Activated CD8-positive, alpha-beta T cell treated with anti-CD3 and anti-CD28 coated beads for 36 hours (primary cell): ENCODE measurements at regions of chr1 and their contacts with region 1.

Region 1: DNA sequence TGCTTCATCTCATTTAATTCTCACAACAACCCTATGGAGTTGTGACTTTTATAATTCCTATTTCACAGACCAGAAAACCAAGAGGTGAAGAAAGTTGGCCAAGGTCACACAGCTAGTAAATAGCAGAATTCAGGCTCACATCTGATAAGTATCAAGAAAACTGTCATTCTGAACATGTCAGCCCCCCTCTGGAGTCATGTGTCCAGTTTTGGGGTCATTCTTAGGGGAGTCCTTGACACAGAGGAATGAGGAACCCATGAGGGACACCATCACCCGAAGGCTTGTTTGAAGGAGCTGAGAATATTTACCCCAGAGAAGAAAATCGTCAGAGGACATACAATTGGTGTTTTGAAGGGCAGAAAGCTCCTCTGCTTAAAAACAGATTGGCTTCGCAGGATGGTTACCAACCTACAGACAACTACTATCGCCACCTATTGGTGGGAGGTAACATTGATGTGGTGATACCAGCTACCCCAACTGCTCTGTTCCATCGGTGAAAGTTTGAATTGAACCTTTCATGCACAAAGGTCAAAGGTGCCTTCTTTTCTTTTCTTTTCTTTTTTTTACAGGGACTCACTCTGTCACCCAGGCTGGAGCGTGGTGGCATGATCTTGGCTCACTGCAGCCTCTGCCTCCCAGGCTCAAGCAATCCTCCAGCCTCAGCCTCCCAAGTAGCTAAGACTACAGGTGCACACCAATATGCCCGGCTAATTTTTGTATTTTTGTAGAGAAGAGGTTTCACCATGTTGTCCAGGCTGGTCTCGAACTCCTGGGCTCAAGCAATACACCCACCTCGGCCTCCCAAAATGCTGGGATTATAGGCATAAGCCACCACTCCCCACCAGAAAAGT is 31.3 kb downstream of the NCMAP start:
- DNase-seq: peak; percentile 70
- ATAC-seq: peak; percentile 98
- H3K4me3 Mint-ChIP-seq: no peak overlapping the region
- H3K27ac Mint-ChIP-seq: peak overlapping the region; percentile 78
- H3K4me1 Mint-ChIP-seq: peaks cover 8% of the 10 kb centered on the region
- H3K27me3 Mint-ChIP-seq: no peaks in the 10 kb centered on the region
- CTCF ChIP-seq: peak; percentile 71

Region 2: DNA sequence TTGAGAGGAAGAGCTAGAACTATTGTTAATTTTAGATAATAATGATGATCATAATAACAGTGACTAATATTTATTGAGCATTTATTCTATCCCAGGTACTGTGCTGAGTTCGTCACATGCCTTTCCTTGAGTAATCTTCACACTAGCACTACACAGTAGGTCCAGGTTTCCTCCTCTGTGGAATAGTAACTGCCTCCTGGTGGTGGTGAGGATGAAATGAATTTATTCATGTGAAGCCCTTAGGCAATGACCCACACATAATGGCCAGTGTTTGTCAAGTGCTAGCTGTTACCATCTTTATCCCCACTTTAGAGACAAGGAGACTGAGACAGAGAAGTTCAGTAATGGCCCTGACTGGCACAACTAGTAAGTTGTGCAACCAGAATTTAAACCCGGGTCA is 165.7 kb before region 1 on chr1:
- CTCF ChIA-PET with region 1: interaction called, 67 read pairs
- POLR2A ChIA-PET with region 1: no interaction called
- intact Hi-C with region 1: loop called (anchors 5 kb)
- DNase-seq: no peak
- ATAC-seq: no peak
- H3K4me3 Mint-ChIP-seq: no peak overlapping the region
- H3K27ac Mint-ChIP-seq: no peak overlapping the region
- H3K4me1 Mint-ChIP-seq: peaks cover 57% of the 10 kb centered on the region
- H3K27me3 Mint-ChIP-seq: no peaks in the 10 kb centered on the region
- CTCF ChIP-seq: no peak

Region 3: DNA sequence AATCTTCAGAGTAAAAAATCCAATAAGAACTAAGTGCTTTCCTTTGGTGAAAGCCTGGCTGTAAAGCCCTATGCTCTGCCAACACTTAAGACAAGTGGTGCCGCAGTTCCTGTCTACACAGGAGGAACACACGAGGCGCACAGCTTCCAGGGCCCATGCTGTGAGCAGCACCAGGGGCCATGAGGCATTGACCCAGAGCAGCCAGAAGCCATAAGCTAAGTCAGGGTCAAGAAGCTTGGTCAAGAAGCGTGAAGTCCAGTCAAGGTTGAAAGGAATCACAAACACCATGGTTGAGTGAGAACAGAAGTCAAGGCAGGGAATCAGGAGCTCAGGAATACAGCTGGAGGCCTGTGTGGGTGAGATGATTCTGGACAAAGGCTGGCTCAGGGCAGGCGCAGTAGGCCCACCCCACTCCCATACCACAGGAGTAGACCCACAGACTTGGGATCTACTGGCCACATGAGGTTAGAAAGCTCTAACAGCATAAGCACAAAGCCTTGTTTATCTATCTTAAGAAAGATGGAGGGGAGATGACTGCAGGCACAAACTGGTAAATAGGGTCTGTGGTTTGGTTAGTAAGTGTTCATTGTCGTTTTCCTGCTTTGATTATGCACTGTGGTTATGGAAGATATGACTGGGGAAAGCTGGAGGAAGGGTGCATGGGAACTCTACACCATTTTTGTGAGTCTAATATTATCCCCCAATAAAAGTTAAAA is 127.5 kb before region 1 on chr1:
- CTCF ChIA-PET with region 1: interaction called, 10 read pairs
- POLR2A ChIA-PET with region 1: no interaction called
- intact Hi-C with region 1: no loop called
- DNase-seq: no peak
- ATAC-seq: no peak
- H3K4me3 Mint-ChIP-seq: no peak overlapping the region
- H3K27ac Mint-ChIP-seq: peak overlapping the region; percentile 7
- H3K4me1 Mint-ChIP-seq: peaks cover 19% of the 10 kb centered on the region
- H3K27me3 Mint-ChIP-seq: no peaks in the 10 kb centered on the region
- CTCF ChIP-seq: no peak

Region 4: GRCh38 chr1:24502709-24503058 is 84.5 kb before region 1 on chr1 and contains the start of gene RCAN3:
- CTCF ChIA-PET with region 1: interaction called, 30 read pairs
- POLR2A ChIA-PET with region 1: no interaction called
- intact Hi-C with region 1: no loop called
- DNase-seq: peak; percentile 92
- ATAC-seq: peak; percentile 81
- H3K4me3 Mint-ChIP-seq: peak within 1 kb of the TSS; percentile 97
- H3K27ac Mint-ChIP-seq: peak within 1 kb of the TSS; percentile 98
- H3K4me1 Mint-ChIP-seq: peaks cover 58% of the 10 kb centered on the region
- H3K27me3 Mint-ChIP-seq: no peaks in the 10 kb centered on the region
- CTCF ChIP-seq: no peak
- total RNA-seq, gene RCAN3: 55.3 to 56.8 TPM

Region 5: GRCh38 chr1:24541711-24542346 is 45.4 kb before region 1 on chr1:
- CTCF ChIA-PET with region 1: interaction called, 27 read pairs
- POLR2A ChIA-PET with region 1: no interaction called
- intact Hi-C with region 1: loop called (anchors 5 kb)
- DNase-seq: peak; percentile 45
- ATAC-seq: no peak
- H3K4me3 Mint-ChIP-seq: no peak overlapping the region
- H3K27ac Mint-ChIP-seq: peak overlapping the region; percentile 84
- H3K4me1 Mint-ChIP-seq: peaks cover 60% of the 10 kb centered on the region
- H3K27me3 Mint-ChIP-seq: no peaks in the 10 kb centered on the region
- CTCF ChIP-seq: peak; percentile 83

Region 6: DNA sequence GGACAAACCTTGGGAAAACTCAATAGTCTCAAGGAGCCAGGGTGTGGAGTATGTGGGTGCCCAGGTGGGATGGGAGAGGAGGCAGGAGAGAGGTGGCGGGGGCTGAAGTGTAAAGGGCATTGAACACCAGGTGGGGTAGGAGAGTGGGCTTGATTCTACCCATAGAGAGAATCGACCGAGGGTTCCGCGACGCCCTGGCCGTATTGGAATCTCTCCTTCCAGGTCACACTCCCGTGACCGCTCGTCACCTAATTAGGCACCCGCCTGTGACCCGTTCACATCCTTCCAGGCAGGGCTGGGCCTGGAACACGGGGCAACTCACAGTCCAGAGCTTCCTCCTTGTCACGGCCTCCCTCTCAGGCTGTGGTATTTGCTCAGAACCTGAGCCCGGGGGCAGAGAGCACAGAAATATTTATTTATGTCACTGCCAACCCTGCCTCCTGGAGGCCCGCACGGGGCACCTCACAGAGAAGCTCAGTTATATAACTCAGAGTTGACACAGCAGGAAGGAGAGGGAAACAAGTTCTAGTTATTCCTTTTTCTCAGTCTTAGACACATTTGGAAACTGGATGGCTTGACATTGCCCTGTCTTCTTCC is 19.3 kb before region 1 on chr1:
- CTCF ChIA-PET with region 1: interaction called, 18 read pairs
- POLR2A ChIA-PET with region 1: interaction called, 4 read pairs
- intact Hi-C with region 1: no loop called
- DNase-seq: no peak
- ATAC-seq: no peak
- H3K4me3 Mint-ChIP-seq: no peak overlapping the region
- H3K27ac Mint-ChIP-seq: no peak overlapping the region
- H3K4me1 Mint-ChIP-seq: peaks cover 15% of the 10 kb centered on the region
- H3K27me3 Mint-ChIP-seq: peaks cover 1% of the 10 kb centered on the region
- CTCF ChIP-seq: no peak

Region 7: DNA sequence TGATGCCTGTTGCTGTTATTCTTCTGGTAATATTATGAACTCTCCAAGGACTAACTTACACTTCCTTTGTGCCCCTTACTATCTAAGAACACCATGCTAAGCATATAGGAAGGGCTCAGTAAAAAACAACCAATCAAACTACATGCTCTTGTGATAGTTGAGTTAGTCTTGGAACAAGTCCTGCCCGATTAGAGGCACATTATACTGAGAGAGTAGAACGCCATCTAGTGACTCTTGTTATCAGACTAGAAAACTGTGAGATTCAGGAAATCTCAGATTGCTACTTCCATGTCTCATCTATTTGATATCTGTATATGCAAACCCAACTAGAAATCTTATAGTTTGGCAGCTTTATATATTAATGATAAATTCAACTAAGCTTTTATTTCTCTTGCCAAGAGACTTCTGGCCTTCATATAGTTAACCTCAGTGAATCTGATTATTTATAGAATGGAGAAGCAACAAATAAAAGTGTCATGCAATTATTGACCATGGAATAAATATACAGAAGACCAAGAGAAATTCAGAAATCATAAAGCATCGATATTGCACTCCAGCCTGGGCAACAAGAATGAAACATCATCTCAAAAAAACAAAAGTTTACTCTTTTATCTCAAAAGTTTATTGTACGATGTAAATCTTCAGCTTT is 48.1 kb after region 1 on chr1:
- CTCF ChIA-PET with region 1: interaction called, 17 read pairs
- POLR2A ChIA-PET with region 1: no interaction called
- intact Hi-C with region 1: loop called (anchors 5 kb)
- DNase-seq: no peak
- ATAC-seq: peak; percentile 83
- H3K4me3 Mint-ChIP-seq: no peak overlapping the region
- H3K27ac Mint-ChIP-seq: no peak overlapping the region
- H3K4me1 Mint-ChIP-seq: peaks cover 10% of the 10 kb centered on the region
- H3K27me3 Mint-ChIP-seq: no peaks in the 10 kb centered on the region
- CTCF ChIP-seq: peak; percentile 66

Region 8: GRCh38 chr1:24986372-24986965 is 399.3 kb after region 1 on chr1:
- CTCF ChIA-PET with region 1: no interaction called
- POLR2A ChIA-PET with region 1: no interaction called
- intact Hi-C with region 1: no loop called
- DNase-seq: peak; percentile 1
- ATAC-seq: no peak
- H3K4me3 Mint-ChIP-seq: no peak overlapping the region
- H3K27ac Mint-ChIP-seq: no peak overlapping the region
- H3K4me1 Mint-ChIP-seq: peaks cover 93% of the 10 kb centered on the region
- H3K27me3 Mint-ChIP-seq: no peaks in the 10 kb centered on the region
- CTCF ChIP-seq: no peak